ENCODE measurements at regions of chr18 and their contacts with region 1.

Region 1: DNA sequence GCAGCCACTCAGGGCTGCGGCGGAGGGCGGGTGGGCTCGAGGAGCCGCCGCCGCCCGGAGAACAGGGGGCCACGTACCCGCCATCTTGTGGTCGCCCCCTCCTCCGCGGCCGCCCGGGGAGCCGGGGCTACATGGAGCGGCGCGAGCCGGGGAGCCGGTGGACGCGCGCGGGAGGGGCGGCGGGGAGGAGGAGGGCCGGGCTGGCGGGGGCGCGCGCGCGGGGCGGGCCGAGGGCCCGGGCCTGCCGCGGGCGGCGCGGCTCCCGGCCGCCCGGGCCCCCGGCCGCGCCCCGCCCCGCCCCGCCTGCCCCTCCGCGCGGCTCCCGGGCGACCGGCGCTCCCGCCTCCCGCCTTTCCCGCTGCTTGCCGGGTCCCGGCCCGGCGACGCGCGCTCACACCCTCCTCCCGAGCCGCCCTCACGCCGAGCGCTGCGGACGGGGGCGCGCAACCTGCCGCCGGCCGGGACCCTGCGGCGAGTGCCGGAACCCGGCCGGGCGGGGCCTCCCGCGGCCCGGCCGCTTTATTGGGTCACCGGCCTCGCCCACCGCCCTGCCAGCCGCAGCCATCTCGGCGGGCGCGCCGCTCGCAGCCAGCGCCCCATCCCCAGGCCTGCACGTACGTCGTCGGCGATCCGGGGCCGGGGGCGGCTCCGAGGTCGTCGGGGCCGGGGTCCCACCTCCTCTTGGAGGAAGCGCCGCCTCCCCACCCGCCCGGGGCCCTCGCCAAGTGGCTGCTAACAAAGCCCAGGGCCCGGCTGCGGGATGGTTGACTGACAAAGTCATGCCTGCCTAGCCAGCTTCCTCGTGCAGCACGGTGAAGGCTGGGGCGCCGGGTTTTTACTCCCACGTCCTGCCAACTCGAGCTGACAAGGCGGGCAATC is at the start of gene PPP4R1:
- DNase-seq: peak; percentile 58
- H3K4me3 Mint-ChIP-seq: peak within 1 kb of the TSS; percentile 93
- H3K27ac Mint-ChIP-seq: peak within 1 kb of the TSS; percentile 77
- H3K4me1 Mint-ChIP-seq: peaks cover 42% of the 10 kb centered on the region
- H3K27me3 Mint-ChIP-seq: peaks cover 27% of the 10 kb centered on the region
- total RNA-seq, gene PPP4R1: 44.3 and 48.8 TPM in 2 replicates

Region 2: GRCh38 chr18:9117980-9118841 is 496.4 kb before region 1 on chr18:
- intact Hi-C with region 1: loop called (anchors 10 kb)
- DNase-seq: no peak
- H3K4me3 Mint-ChIP-seq: peak overlapping the region; percentile 39
- H3K27ac Mint-ChIP-seq: peak overlapping the region; percentile 84
- H3K4me1 Mint-ChIP-seq: peaks cover 51% of the 10 kb centered on the region
- H3K27me3 Mint-ChIP-seq: no peaks in the 10 kb centered on the region

Region 3: DNA sequence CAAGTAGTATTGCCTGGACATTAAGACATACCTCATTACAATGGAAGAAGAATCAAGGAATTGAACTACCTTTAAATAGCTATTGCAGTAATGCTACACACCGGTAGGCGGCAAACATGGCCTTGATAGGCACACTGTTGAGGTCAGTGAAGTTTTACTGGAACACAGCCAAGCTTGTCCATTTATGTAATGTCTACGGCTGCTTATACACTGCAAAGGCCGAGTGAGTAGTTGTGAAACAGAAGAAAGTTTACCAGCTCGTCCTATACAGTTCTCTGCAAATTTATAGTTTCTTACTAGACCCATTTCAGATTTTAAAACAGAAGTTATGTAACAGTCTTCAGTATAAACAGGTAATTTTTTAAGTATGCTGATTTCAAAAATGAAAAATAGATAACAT is 39.1 kb before region 1 on chr18:
- intact Hi-C with region 1: no loop called
- DNase-seq: no peak
- H3K4me3 Mint-ChIP-seq: no peak overlapping the region
- H3K27ac Mint-ChIP-seq: no peak overlapping the region
- H3K4me1 Mint-ChIP-seq: no peaks in the 10 kb centered on the region
- H3K27me3 Mint-ChIP-seq: no peaks in the 10 kb centered on the region

Region 4: DNA sequence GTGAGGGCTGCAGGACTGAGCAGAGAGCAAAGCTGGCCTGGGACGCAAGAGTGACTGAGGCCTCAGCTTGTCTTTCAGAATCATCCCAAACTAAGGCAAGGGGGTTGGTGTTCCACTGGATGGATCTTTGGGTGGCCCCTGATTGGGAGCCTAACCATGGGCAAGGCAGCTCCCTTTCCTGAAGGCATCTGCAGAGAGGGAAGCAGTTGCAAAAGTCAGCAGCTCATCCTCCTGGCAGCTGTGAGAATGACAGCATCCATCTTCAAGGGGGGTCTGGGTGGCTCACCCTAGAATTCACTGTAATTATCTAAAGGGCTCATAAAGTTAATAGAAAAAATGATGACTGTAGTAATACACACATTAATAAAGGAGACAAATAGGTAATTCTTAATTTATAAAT is 46.9 kb after region 1 on chr18:
- intact Hi-C with region 1: no loop called
- DNase-seq: no peak
- H3K4me3 Mint-ChIP-seq: no peak overlapping the region
- H3K27ac Mint-ChIP-seq: no peak overlapping the region
- H3K4me1 Mint-ChIP-seq: no peaks in the 10 kb centered on the region
- H3K27me3 Mint-ChIP-seq: peaks cover 3% of the 10 kb centered on the region

Region 5: DNA sequence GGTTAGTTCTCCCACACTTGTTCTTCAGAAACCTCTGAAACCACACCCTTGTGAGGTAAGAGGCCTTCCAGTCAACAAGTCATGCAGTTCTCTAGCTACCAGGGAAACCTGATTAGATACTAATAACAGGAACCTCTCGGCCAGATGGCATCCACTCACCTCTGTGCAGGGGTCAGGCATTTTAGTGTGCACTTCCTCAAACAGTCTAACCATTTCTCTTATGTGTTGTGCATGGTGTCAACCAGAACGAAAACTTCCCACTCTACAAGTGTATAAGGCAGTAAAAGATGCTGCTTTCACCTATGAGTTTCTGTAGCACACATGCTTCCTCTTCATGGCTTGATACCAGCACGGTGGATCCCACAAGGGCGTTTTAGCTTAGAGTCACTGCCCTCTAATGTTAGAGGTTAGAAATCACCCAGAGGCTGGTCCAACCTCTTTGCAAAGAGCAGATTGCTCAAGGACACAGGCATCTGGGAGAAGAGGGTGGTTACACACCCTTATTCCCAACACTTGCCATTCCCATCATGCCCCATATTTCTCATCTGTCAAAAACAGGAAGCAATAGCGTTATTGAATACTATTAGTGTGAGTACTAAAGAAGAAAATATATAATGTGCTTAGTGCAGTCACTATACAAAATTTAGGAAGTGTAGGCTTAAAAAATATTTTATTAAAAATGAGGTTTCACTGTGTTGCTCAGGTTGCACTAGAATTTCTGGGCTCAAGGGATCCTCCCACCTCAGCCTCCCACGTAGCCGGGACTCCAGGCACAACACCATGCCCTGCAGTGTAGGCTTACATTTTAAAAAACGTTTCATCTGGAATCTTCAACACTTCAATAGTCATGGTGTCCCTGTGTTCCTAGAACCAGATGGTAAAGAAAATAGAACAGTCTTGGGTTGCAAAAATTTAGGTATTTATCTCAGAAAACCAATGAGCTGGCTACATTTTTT is 58.9 kb after region 1 on chr18:
- intact Hi-C with region 1: loop called (anchors 2 kb)
- DNase-seq: no peak
- H3K4me3 Mint-ChIP-seq: no peak overlapping the region
- H3K27ac Mint-ChIP-seq: no peak overlapping the region
- H3K4me1 Mint-ChIP-seq: peaks cover 6% of the 10 kb centered on the region
- H3K27me3 Mint-ChIP-seq: peaks cover 21% of the 10 kb centered on the region

Region 6: GRCh38 chr18:9951022-9951859 is 336.6 kb after region 1 on chr18:
- intact Hi-C with region 1: loop called (anchors 10 kb)
- DNase-seq: no peak
- H3K4me3 Mint-ChIP-seq: no peak overlapping the region
- H3K27ac Mint-ChIP-seq: no peak overlapping the region
- H3K4me1 Mint-ChIP-seq: peaks cover 4% of the 10 kb centered on the region
- H3K27me3 Mint-ChIP-seq: no peaks in the 10 kb centered on the region

Measured in activated T-helper 2 cell treated with anti-CD3 and anti-CD28 coated beads, Interferon-gamma antibody, Interleukin-2, Interleukin-4, amounts not matched to agents 10 μg/mL and 5 μg/mL and 100 μg/mL, durations not matched to agents 14 hours and 24 hours and 36 hours (primary cell).